HCT116 (cell line): ENCODE measurements at regions of chr5 and their contacts with region 1.

Region 1: DNA sequence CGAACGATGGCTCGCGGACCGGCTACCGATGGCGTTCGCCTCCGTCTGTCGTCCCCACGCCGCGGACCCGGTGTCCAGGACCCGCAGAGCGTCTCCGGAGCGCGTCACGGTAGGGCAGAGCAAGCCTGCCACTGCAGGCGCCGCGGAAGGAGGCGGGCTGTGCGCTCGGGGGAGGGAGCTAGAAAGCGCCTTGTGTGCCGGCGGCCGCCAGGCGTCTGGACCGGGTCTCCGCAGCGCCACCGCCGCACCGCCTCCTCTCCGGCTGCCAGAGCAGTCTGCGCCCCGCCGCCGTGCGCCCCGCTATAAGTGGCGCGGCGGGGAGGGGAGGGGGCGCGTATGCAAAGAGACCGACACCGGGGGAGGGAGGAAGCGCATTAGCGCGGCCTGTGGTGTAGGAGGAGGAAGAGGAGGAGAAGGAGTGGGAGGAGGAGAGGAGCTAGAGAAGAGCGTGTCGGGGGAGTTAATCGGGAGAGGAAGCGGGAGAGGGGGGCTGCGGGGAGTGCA is at the start of gene ENC1:
- DNase-seq: peak; percentile 55
- ATAC-seq: peak; percentile 78
- H3K4me3 ChIP-seq: peak within 1 kb of the TSS; percentile 69 to 82
- H3K27ac ChIP-seq: peak within 1 kb of the TSS; percentile 92
- H3K4me1 ChIP-seq: peaks cover 51 to 58% of the 10 kb centered on the region in 2 experiments
- H3K27me3 ChIP-seq: no peaks in the 10 kb centered on the region
- CTCF ChIP-seq: peak; percentile 15 to 35 (median 24); a peak in 3 of 6 replicates
- POLR2A ChIP-seq: peak; percentile 38
- RAD21 ChIP-seq: peak; percentile 38
- total RNA-seq, gene ENC1: 30.0 TPM

Region 2: DNA sequence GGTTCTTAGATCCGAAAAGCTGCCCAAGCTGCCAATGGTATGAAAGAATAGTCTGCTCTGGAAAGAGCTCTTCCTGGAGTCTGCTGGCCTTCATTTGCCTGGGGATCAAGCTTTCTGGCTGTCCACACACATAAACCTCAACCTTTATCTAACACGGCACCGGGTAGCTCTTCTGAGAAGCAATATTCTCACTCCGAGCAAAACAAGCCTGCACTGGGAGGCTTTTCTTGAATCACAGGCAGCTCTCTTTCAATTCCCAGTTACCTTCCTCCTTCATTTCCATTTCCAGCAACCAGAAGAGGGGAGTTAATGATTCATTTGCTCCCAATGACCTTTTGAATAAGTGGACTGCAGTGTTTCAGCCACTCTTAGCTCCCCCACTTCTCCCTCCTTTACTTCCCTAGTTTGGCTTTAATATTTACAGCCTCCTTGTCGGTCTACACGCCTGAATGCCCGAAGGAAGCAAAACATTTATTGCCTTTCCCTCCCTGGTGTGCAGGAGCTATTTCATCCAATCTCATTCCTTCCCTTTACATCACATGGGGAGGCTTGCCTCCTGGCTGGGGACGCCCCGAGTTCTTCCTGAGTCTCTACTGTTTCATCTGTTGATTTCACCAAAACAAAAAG is 827.4 kb before region 1 on chr5:
- CTCF ChIA-PET with region 1: no interaction called
- POLR2A ChIA-PET with region 1: no interaction called
- RAD21 ChIA-PET with region 1: no interaction called
- intact Hi-C with region 1: loop called (anchors 10 kb)
- DNase-seq: no peak
- ATAC-seq: no peak
- H3K4me3 ChIP-seq: no peak overlapping the region
- H3K27ac ChIP-seq: no peak overlapping the region
- H3K4me1 ChIP-seq: no peaks in the 10 kb centered on the region
- H3K27me3 ChIP-seq: no peaks in the 10 kb centered on the region
- CTCF ChIP-seq: no peak
- POLR2A ChIP-seq: no peak
- RAD21 ChIP-seq: no peak

Region 3: GRCh38 chr5:74035521-74035981 is 605.0 kb before region 1 on chr5:
- CTCF ChIA-PET with region 1: interaction called, 3 read pairs
- POLR2A ChIA-PET with region 1: interaction called, 3 read pairs
- RAD21 ChIA-PET with region 1: no interaction called
- intact Hi-C with region 1: loop called (anchors 1 kb)
- DNase-seq: peak; percentile 36
- ATAC-seq: peak; percentile 84
- H3K4me3 ChIP-seq: no peak overlapping the region
- H3K27ac ChIP-seq: no peak overlapping the region
- H3K4me1 ChIP-seq: peaks cover 23% of the 10 kb centered on the region in 2 experiments
- H3K27me3 ChIP-seq: 0 out of 2 replicates have a peak, but pooled peaks cover 3% of the 10 kb centered on the region
- CTCF ChIP-seq: peak; percentile 46 to 53 (median 51); a peak in 5 of 6 replicates
- POLR2A ChIP-seq: no peak
- RAD21 ChIP-seq: peak; percentile 79

Region 4: GRCh38 chr5:74212336-74212735 is 428.2 kb before region 1 on chr5:
- CTCF ChIA-PET with region 1: interaction called, 11 read pairs
- POLR2A ChIA-PET with region 1: interaction called, 3 read pairs
- RAD21 ChIA-PET with region 1: interaction called in 1 of 2 experiments, 3 read pairs
- intact Hi-C with region 1: loop called (anchors 5 kb)
- DNase-seq: peak; percentile 26
- ATAC-seq: peak; percentile 91
- H3K4me3 ChIP-seq: no peak overlapping the region
- H3K27ac ChIP-seq: no peak overlapping the region
- H3K4me1 ChIP-seq: no peaks in the 10 kb centered on the region
- H3K27me3 ChIP-seq: no peaks in the 10 kb centered on the region
- CTCF ChIP-seq: peak; percentile 24 to 59 (median 54); a peak in 5 of 6 replicates
- POLR2A ChIP-seq: no peak
- RAD21 ChIP-seq: peak; percentile 59

Region 5: GRCh38 chr5:74342948-74343682 is 297.4 kb before region 1 on chr5:
- CTCF ChIA-PET with region 1: no interaction called
- POLR2A ChIA-PET with region 1: no interaction called
- RAD21 ChIA-PET with region 1: no interaction called
- intact Hi-C with region 1: loop called (anchors 5 kb)
- DNase-seq: no peak
- ATAC-seq: peak; percentile 20; the same call in 1 of the 2 replicates
- H3K4me3 ChIP-seq: no peak overlapping the region
- H3K27ac ChIP-seq: no peak overlapping the region
- H3K4me1 ChIP-seq: peaks cover 6 to 8% of the 10 kb centered on the region in 2 experiments; a peak in 2 of 4 replicates
- H3K27me3 ChIP-seq: no peaks in the 10 kb centered on the region
- CTCF ChIP-seq: no peak
- POLR2A ChIP-seq: no peak
- RAD21 ChIP-seq: no peak

Region 6: GRCh38 chr5:74394916-74395781 is 245.4 kb before region 1 on chr5:
- CTCF ChIA-PET with region 1: interaction called, 3 read pairs
- POLR2A ChIA-PET with region 1: no interaction called
- RAD21 ChIA-PET with region 1: no interaction called
- intact Hi-C with region 1: loop called (anchors 2 kb)
- DNase-seq: no peak
- ATAC-seq: peak; percentile 47; the same call in 1 of the 2 replicates
- H3K4me3 ChIP-seq: no peak overlapping the region
- H3K27ac ChIP-seq: no peak overlapping the region
- H3K4me1 ChIP-seq: peaks cover 0 to 9% of the 10 kb centered on the region in 2 experiments; a peak in 3 of 4 replicates
- H3K27me3 ChIP-seq: no peaks in the 10 kb centered on the region
- CTCF ChIP-seq: peak in 2 of 3 experiments; percentile 5 to 17; a peak in 1 of 6 replicates
- POLR2A ChIP-seq: no peak
- RAD21 ChIP-seq: peak; percentile 39

Region 7: DNA sequence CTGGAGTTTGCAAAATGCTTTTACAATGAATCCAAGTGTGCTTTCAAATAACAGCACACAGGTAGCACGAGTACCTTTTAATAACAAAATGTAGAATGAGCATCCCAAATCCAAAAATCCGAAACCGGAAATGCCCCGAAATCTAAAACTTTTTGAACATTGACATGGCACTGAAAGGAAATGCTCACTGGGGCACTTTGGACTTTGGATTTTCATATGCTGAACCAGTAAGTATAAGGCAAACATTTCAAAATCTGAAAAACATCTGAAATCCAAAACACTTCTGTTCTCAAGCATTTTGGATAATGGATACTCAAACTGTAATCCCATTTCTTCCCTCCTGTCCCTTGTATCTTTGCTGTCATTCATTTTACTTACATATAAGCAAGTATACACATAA is 361.8 kb after region 1 on chr5:
- CTCF ChIA-PET with region 1: no interaction called
- POLR2A ChIA-PET with region 1: no interaction called
- RAD21 ChIA-PET with region 1: no interaction called
- intact Hi-C with region 1: no loop called
- DNase-seq: no peak
- ATAC-seq: no peak
- H3K4me3 ChIP-seq: no peak overlapping the region
- H3K27ac ChIP-seq: no peak overlapping the region
- H3K4me1 ChIP-seq: no peaks in the 10 kb centered on the region
- H3K27me3 ChIP-seq: no peaks in the 10 kb centered on the region
- CTCF ChIP-seq: no peak
- POLR2A ChIP-seq: no peak
- RAD21 ChIP-seq: no peak